Ascending aorta (tissue), 2 donors: ENCODE measurements at regions of chr5 and their contacts with region 1.

Region 1: GRCh38 chr5:112757468-112758208 is 20.0 kb downstream of the APC start:
- DNase-seq: no peak
- H3K4me3 ChIP-seq: peak overlapping the region; percentile 16 to 20
- H3K27ac ChIP-seq: peak overlapping the region in 1 of 2 donors; percentile 37
- H3K4me1 ChIP-seq: peaks cover 0 to 7% of the 10 kb centered on the region in 2 donors
- H3K27me3 ChIP-seq: no peaks in the 10 kb centered on the region
- CTCF ChIP-seq: peak; percentile 55 to 84 (median 57)

Region 2: GRCh38 chr5:112160652-112161391 is 596.8 kb before region 1 on chr5:
- intact Hi-C with region 1: loop called (anchors 10 kb)
- DNase-seq: peak; percentile 70 to 96
- H3K4me3 ChIP-seq: peak overlapping the region; percentile 69 to 78
- H3K27ac ChIP-seq: peak overlapping the region; percentile 64 to 77
- H3K4me1 ChIP-seq: peaks cover 4 to 14% of the 10 kb centered on the region in 2 donors
- H3K27me3 ChIP-seq: no peaks in the 10 kb centered on the region
- CTCF ChIP-seq: peak; percentile 94 to 95 (median 95)

Region 3: DNA sequence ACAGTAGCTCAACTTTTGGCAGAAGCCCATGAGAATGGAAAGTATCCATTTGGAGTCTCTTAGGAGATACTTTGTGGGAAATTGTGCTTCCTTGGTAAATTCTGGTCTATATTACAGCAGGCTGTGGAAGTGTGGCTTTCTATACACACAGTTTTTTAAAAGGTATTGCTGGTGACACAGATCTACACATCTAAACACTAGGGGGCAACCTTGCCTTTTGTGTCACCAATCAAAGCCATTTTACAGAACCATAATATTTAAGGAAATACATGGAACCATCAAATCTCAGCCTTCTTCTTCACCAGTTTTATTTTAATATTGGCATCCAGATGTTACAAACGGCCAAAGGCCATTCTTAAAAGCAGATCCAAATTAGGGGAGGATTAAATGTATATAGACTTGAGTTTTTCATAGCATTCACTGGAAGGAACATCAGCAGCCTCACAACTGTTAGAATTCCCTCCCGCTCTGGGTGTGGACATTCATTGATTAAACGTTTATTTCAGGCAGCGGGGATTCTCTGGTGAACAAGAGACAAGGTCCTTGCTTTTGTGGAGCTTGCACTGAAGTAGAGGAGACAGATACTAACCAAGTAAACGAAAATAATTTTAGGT is 206.1 kb before region 1 on chr5:
- intact Hi-C with region 1: loop called (anchors 1 kb)
- DNase-seq: no peak
- H3K4me3 ChIP-seq: no peak overlapping the region
- H3K27ac ChIP-seq: no peak overlapping the region
- H3K4me1 ChIP-seq: peaks cover 0 to 10% of the 10 kb centered on the region in 2 donors
- H3K27me3 ChIP-seq: no peaks in the 10 kb centered on the region
- CTCF ChIP-seq: peak; percentile 62 to 86 (median 63)

Region 4: DNA sequence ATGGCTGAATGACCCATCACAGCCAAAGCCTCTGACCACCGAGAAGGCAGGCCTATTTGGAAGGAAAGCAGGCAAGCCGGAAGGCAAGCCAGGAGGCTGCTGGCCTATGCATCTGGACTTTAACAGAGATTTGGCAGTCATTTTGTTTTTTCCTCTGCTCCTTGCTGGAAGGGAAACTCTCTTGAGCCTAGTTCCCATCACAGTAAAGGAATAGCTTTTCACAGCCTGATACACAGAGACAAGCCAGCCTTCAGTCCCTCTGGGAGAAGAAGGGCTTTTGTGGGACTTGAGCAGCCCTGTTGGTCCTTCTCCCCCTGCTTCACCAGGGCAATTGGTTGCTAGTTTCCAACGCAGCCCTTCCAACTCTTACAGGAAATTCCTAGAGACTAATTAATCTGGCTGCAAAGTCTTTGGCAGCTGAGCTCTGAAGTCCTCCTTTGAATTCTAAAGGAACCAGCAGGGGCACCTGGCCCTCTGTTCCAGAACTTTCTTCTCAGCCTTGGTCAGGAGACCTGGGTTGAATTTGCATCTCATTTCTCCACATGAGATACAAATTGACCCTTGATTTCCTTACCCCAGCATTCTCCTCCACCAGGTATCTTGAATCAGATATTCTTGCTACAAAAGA is 181.2 kb before region 1 on chr5:
- intact Hi-C with region 1: no loop called
- DNase-seq: no peak
- H3K4me3 ChIP-seq: no peak overlapping the region
- H3K27ac ChIP-seq: peak overlapping the region; percentile 75
- H3K4me1 ChIP-seq: peaks cover 0 to 7% of the 10 kb centered on the region in 2 donors
- H3K27me3 ChIP-seq: no peaks in the 10 kb centered on the region
- CTCF ChIP-seq: no peak

Region 5: GRCh38 chr5:112691758-112692157 is 65.9 kb before region 1 on chr5:
- intact Hi-C with region 1: loop called (anchors 5 kb)
- DNase-seq: no peak
- H3K4me3 ChIP-seq: no peak overlapping the region
- H3K27ac ChIP-seq: no peak overlapping the region
- H3K4me1 ChIP-seq: no peaks in the 10 kb centered on the region
- H3K27me3 ChIP-seq: no peaks in the 10 kb centered on the region
- CTCF ChIP-seq: no peak

Region 6: GRCh38 chr5:113909782-113910181 is 1152.1 kb after region 1 on chr5:
- intact Hi-C with region 1: no loop called
- DNase-seq: no peak
- H3K4me3 ChIP-seq: no peak overlapping the region
- H3K27ac ChIP-seq: no peak overlapping the region
- H3K4me1 ChIP-seq: no peaks in the 10 kb centered on the region
- H3K27me3 ChIP-seq: no peaks in the 10 kb centered on the region
- CTCF ChIP-seq: no peak